ENCODE measurements at regions of chr7 and their contacts with region 1.

Region 1: DNA sequence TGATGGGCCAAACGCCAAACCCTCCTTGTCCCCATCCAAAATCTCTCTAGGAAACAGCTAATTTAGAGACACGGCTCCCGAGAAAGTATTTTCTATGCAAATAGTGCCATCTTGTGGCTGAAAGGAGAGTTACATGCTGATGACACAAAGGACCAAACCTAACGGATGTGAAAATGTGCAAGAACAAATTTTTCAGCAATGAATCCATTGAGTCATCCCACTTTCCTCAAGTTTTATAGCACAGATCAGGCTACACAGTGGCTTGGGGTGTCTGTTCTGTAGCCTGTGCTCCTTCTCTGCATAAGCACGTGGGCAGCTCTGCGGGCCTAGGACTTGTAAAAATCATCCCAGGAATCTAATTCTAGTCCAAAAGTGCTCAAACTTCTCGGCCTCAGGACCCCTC is 154.8 kb upstream of the PRR15 start:
- DNase-seq: peak; percentile 41
- H3K4me3 Mint-ChIP-seq: no peak overlapping the region
- H3K27ac Mint-ChIP-seq: no peak overlapping the region
- H3K4me1 Mint-ChIP-seq: no peaks in the 10 kb centered on the region
- H3K27me3 Mint-ChIP-seq: peaks cover 3% of the 10 kb centered on the region

Region 2: DNA sequence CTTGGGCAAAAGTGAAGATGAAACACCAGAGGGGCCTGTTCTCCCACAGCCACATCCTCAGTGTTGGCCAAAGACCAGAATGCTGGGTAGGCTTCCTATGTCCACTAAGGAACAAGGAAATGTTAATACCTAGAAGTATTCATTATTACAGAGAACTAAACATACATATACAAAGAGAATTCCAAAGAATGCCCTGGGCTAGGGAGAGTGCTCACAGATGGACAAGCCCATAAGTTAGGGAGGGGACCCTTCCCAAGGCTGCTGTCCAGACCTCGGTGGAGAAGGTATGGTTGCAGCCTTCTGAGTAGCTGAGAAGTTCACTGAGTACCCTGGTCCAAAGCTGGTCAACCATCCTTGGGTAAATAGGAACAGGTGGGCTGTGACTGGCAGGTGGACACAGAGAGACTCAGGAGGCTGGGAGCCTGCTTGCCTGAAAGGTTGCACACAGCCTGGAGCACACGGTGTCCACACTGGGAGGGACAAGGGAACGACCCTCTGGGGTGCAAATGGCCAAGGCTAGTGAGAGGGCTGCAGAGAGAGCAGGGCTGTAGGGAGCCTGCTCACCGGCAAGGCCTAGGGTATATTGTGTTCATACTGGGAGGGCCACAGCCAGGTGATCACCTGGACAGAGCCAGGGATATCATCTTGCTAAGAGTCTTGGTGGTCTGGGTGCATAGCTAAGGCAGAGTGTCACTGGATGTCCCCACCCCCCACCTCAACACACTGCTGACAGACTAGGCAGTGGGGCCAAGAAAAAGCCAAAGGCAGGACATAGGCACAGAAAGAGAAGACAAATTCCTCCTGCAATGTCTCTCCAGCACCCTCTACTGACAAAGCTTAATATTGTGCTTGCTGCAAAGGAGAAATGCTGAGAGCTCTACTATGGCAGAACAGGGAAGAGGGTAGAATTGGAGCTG is 302.8 kb before region 1 on chr7:
- CTCF ChIA-PET with region 1: interaction called, 13 read pairs
- POLR2A ChIA-PET with region 1: no interaction called
- intact Hi-C with region 1: no loop called
- DNase-seq: peak; percentile 12
- H3K4me3 Mint-ChIP-seq: no peak overlapping the region
- H3K27ac Mint-ChIP-seq: no peak overlapping the region
- H3K4me1 Mint-ChIP-seq: peaks cover 4% of the 10 kb centered on the region
- H3K27me3 Mint-ChIP-seq: peaks cover 7% of the 10 kb centered on the region

Region 3: GRCh38 chr7:29113384-29114103 is 295.3 kb before region 1 on chr7:
- CTCF ChIA-PET with region 1: interaction called, 7 read pairs
- POLR2A ChIA-PET with region 1: no interaction called
- intact Hi-C with region 1: loop called (anchors 2 kb)
- DNase-seq: peak; percentile 36
- H3K4me3 Mint-ChIP-seq: no peak overlapping the region
- H3K27ac Mint-ChIP-seq: no peak overlapping the region
- H3K4me1 Mint-ChIP-seq: peaks cover 11% of the 10 kb centered on the region
- H3K27me3 Mint-ChIP-seq: peaks cover 22% of the 10 kb centered on the region

Region 4: GRCh38 chr7:29189743-29190201 is 219.1 kb before region 1 on chr7:
- CTCF ChIA-PET with region 1: interaction called, 62 read pairs
- POLR2A ChIA-PET with region 1: no interaction called
- intact Hi-C with region 1: loop called (anchors 1 kb)
- DNase-seq: peak; percentile 68
- H3K4me3 Mint-ChIP-seq: no peak overlapping the region
- H3K27ac Mint-ChIP-seq: no peak overlapping the region
- H3K4me1 Mint-ChIP-seq: peaks cover 2% of the 10 kb centered on the region
- H3K27me3 Mint-ChIP-seq: peaks cover 17% of the 10 kb centered on the region

Region 5: GRCh38 chr7:29194594-29195427 is 214.0 kb before region 1 on chr7 and contains the start of gene CHN2:
- CTCF ChIA-PET with region 1: interaction called, 62 read pairs
- POLR2A ChIA-PET with region 1: no interaction called
- intact Hi-C with region 1: loop called (anchors 1 kb)
- DNase-seq: peak; percentile 59
- H3K4me3 Mint-ChIP-seq: peak within 1 kb of the TSS; percentile 68
- H3K27ac Mint-ChIP-seq: no peak within 1 kb of the TSS
- H3K4me1 Mint-ChIP-seq: peaks cover 12% of the 10 kb centered on the region
- H3K27me3 Mint-ChIP-seq: peaks cover 31% of the 10 kb centered on the region
- total RNA-seq, gene CHN2: 0.53 to 0.69 TPM

Region 6: GRCh38 chr7:29285444-29285793 is 123.4 kb before region 1 on chr7:
- CTCF ChIA-PET with region 1: no interaction called
- POLR2A ChIA-PET with region 1: no interaction called
- intact Hi-C with region 1: no loop called
- DNase-seq: peak; percentile 68
- H3K4me3 Mint-ChIP-seq: no peak overlapping the region
- H3K27ac Mint-ChIP-seq: no peak overlapping the region
- H3K4me1 Mint-ChIP-seq: peaks cover 29% of the 10 kb centered on the region
- H3K27me3 Mint-ChIP-seq: peaks cover 15% of the 10 kb centered on the region